PC-9 (cell line): ENCODE measurements at regions of chr3 and their contacts with region 1.

Region 1: GRCh38 chr3:32177702-32178198 is 60.7 kb upstream of the CMTM8 start:
- DNase-seq: peak; percentile 67 to 69
- H3K4me3 ChIP-seq: no peak overlapping the region
- H3K27ac ChIP-seq: no peak overlapping the region
- H3K4me1 ChIP-seq: no peaks in the 10 kb centered on the region
- H3K27me3 ChIP-seq: no peaks in the 10 kb centered on the region
- CTCF ChIP-seq: peak; percentile 58

Region 2: DNA sequence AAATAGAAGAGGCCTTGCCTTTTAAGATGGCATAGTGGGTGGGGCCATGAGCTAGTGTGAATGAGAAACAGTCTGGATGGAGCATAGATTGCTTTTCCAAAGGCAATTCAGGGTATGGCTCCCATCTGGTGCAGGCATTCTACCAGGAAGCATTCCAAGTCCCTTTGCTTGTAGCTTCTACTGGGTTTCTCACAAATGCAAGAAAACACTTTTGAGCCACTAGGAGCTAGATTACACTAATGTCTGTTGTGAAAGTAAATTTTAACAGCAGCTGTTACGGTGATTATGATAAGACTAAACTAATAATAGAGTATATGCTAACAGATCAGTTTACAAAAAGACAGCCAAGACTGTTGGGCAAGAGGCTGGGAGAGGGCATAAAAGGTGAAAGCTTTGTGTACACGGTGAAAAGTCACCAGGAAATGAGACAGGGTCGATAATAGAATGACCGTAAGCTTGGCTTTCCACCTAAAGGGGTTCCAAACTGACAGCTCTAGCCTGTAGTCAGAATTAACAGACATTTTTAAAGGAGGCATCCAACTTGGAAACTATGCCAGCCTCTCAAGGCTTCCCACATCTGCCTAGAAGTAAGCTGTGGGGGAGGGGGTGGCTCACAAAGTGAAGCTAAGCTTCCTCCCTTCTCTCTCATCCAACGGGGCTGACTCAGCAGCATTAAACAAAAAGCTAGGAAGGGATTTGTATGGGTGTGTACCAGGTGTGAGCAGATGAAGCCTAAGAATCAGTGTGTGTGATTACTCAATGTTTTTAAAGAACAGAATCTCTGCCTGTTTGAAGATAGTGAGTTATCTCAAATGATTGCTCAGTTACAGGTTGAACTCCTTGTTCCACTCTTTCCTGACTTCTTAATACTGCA is 132.4 kb before region 1 on chr3:
- CTCF ChIA-PET with region 1: no interaction called
- POLR2A ChIA-PET with region 1: no interaction called
- intact Hi-C with region 1: no loop called
- DNase-seq: peak; percentile 47 to 90
- H3K4me3 ChIP-seq: peak overlapping the region; percentile 38; the same call in 1 of the 2 replicates
- H3K27ac ChIP-seq: peak overlapping the region; percentile 69
- H3K4me1 ChIP-seq: peaks cover 28% of the 10 kb centered on the region
- H3K27me3 ChIP-seq: no peaks in the 10 kb centered on the region
- CTCF ChIP-seq: no peak

Region 3: GRCh38 chr3:32249184-32249782 is 71.5 kb after region 1 on chr3:
- CTCF ChIA-PET with region 1: interaction called, 15 read pairs
- POLR2A ChIA-PET with region 1: no interaction called
- intact Hi-C with region 1: no loop called
- DNase-seq: peak; percentile 17 to 88
- H3K4me3 ChIP-seq: no peak overlapping the region
- H3K27ac ChIP-seq: peak overlapping the region; percentile 84
- H3K4me1 ChIP-seq: peaks cover 30% of the 10 kb centered on the region
- H3K27me3 ChIP-seq: no peaks in the 10 kb centered on the region
- CTCF ChIP-seq: no peak

Region 4: GRCh38 chr3:32303977-32304881 is 126.5 kb after region 1 on chr3:
- CTCF ChIA-PET with region 1: interaction called, 15 read pairs
- POLR2A ChIA-PET with region 1: no interaction called
- intact Hi-C with region 1: no loop called
- DNase-seq: no peak
- H3K4me3 ChIP-seq: no peak overlapping the region
- H3K27ac ChIP-seq: no peak overlapping the region
- H3K4me1 ChIP-seq: no peaks in the 10 kb centered on the region
- H3K27me3 ChIP-seq: no peaks in the 10 kb centered on the region
- CTCF ChIP-seq: no peak

Region 5: DNA sequence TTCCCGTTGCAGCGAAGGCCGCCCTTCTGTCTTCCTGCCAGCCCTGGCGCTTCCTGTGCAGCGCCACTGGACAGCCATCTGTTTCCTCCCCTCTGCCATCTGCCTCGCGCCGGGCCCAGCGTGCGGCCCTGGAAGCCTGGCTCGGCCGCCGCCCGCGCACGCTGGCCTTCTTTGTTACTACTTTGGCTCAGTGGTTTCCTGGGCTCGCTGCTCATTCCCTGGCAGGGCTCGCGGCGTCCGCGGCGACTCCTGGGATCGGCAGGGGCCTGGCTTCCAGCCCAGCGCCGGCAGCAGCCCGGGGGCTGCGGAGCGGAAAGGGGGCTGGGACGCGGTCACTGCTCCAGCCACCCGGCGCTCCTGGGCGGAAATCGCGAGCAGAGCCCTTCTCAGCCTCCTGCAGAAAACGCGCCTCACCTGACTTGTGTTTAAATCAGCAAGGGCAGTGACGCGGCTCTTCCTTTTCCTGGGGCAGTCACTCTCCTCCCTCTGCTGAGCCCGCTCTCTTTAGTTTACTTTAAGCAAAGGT is 223.9 kb after region 1 on chr3:
- CTCF ChIA-PET with region 1: no interaction called
- POLR2A ChIA-PET with region 1: no interaction called
- intact Hi-C with region 1: loop called (anchors 1 kb)
- DNase-seq: peak; percentile 53 to 67
- H3K4me3 ChIP-seq: peak overlapping the region; percentile 58
- H3K27ac ChIP-seq: peak overlapping the region; percentile 83
- H3K4me1 ChIP-seq: peaks cover 21% of the 10 kb centered on the region
- H3K27me3 ChIP-seq: no peaks in the 10 kb centered on the region
- CTCF ChIP-seq: no peak

Region 6: DNA sequence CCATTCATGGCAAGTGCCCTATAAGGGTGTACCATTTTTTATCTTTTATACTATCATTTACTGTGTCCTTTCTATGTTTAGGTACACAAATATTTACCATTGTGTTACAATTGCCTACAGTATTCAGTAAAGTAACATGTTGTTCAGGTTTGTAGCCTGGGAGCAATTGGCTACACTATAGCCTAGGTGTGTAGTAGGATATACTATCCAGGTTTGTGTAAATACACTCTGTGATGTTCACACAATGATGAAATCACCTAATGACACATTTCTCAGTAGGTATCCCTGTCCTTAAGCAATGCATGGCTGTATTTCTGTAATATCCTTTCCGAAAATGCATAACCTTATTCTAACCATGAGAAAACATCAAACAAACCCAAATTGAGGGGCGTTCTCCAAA is 489.4 kb after region 1 on chr3:
- CTCF ChIA-PET with region 1: no interaction called
- POLR2A ChIA-PET with region 1: no interaction called
- intact Hi-C with region 1: loop called (anchors 1 kb)
- DNase-seq: no peak
- H3K4me3 ChIP-seq: no peak overlapping the region
- H3K27ac ChIP-seq: no peak overlapping the region
- H3K4me1 ChIP-seq: no peaks in the 10 kb centered on the region
- H3K27me3 ChIP-seq: no peaks in the 10 kb centered on the region
- CTCF ChIP-seq: no peak